CD4-positive, alpha-beta T cell (primary cell): ENCODE measurements at regions of chr19 and their contacts with region 1.

Region 1: DNA sequence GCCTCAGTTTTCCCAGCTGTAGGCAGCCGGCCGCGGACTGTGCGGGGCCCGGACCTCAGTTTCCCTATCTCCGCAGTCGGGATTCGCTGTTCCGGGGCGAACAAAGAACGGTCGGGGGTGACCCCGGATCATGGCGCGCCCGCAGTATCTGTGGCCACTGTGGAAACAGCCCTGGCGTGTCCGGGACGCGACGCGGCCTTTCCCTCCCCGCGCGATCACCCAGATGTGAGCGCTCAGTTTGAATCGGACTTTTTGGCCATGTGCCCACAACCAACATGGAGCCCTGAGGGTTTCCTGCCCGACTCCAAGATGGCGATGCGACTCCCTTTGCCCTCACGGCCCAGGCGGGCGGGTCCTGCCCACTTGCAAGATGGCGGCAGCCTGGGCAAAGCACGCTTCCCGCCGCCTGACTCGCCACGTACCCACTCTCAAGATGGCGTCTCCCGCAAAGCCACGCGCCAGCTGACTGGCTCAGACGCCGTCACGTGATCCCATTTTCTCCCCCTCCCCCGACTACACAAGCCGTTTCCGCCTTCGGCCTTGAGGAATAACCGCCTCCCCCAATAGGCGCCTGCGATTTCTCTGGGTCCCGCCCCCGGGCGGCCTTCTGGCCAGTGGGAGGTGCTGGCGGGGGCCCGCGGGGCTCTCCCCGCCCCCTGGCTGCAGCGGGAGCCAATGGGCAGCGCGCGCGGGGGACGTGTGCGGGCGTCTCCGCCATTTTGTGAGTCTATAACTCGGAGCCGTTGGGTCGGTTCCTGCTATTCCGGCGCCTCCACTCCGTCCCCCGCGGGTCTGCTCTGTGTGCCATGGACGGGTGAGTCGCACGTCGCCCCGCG is at the start of gene PTBP1:
- DNase-seq: peak; percentile 97 to 100 (median 99)
- ATAC-seq: peak; percentile 83
- H3K4me3 ChIP-seq: peak within 1 kb of the TSS; percentile 87
- H3K4me3 Mint-ChIP-seq: peak within 1 kb of the TSS; percentile 89
- H3K27ac ChIP-seq: peak within 1 kb of the TSS; percentile 67 to 72
- H3K27ac Mint-ChIP-seq: peak within 1 kb of the TSS; percentile 87
- H3K4me1 ChIP-seq: peaks cover 48% of the 10 kb centered on the region
- H3K4me1 Mint-ChIP-seq: peaks cover 36% of the 10 kb centered on the region
- H3K27me3 ChIP-seq: no peaks in the 10 kb centered on the region
- H3K27me3 Mint-ChIP-seq: no peaks in the 10 kb centered on the region
- CTCF ChIP-seq: no peak
- total RNA-seq, gene PTBP1: 246 to 252 TPM

Region 2: GRCh38 chr19:835210-835810 is 38.4 kb after region 1 on chr19:
- CTCF ChIA-PET with region 1: no interaction called
- POLR2A ChIA-PET with region 1: no interaction called
- intact Hi-C with region 1: no loop called
- DNase-seq: peak in 1 of 14 experiments; percentile 44
- ATAC-seq: no peak
- H3K4me3 ChIP-seq: no peak overlapping the region
- H3K4me3 Mint-ChIP-seq: no peak overlapping the region
- H3K27ac ChIP-seq: no peak overlapping the region
- H3K27ac Mint-ChIP-seq: no peak overlapping the region
- H3K4me1 ChIP-seq: no peaks in the 10 kb centered on the region
- H3K4me1 Mint-ChIP-seq: no peaks in the 10 kb centered on the region
- H3K27me3 ChIP-seq: peaks cover 5 to 8% of the 10 kb centered on the region in 2 experiments
- H3K27me3 Mint-ChIP-seq: peaks cover 14% of the 10 kb centered on the region
- CTCF ChIP-seq: no peak

Region 3: DNA sequence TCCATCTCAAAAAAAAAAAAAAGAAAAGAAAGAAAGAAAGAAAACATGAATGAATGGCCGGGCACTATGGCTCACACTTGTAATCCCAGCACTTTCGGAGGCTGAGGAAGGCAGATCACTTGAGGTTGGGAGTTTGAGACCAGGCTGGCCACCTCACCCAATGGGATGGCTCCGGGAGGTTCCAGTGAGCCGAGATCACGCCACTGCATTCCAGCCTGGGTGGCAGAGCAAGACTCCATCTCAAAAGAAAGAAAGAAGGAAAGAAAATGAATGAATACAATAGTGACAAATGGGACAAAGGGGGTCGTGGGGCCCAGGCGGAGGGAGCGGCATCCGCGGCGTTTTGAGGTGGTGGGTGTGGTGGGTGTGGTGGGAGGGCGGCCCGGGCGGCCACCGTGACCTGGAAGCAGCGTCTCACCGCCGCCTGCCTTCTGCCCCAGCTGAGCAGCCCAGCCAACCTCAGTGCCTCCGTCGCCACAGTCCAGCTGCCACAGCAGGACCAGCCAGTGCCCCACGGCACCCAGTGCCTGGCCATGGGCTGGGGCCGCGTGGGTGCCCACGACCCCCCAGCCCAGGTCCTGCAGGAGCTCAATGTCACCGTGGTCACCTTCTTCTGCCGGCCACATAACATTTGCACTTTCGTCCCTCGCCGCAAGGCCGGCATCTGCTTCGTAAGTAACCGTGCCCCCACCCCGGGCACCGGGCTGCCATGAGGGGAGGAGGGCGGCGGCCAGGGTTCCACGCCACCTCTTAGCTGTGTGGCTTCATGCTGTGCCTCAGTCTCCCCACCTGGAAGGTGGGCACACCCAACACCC is 49.0 kb after region 1 on chr19:
- CTCF ChIA-PET with region 1: no interaction called
- POLR2A ChIA-PET with region 1: no interaction called
- intact Hi-C with region 1: no loop called
- DNase-seq: no peak
- ATAC-seq: no peak
- H3K4me3 ChIP-seq: no peak overlapping the region
- H3K4me3 Mint-ChIP-seq: no peak overlapping the region
- H3K27ac ChIP-seq: no peak overlapping the region
- H3K27ac Mint-ChIP-seq: no peak overlapping the region
- H3K4me1 ChIP-seq: peaks cover 14% of the 10 kb centered on the region
- H3K4me1 Mint-ChIP-seq: no peaks in the 10 kb centered on the region
- H3K27me3 ChIP-seq: peaks cover 43 to 52% of the 10 kb centered on the region in 2 experiments
- H3K27me3 Mint-ChIP-seq: peaks cover 70% of the 10 kb centered on the region
- CTCF ChIP-seq: no peak

Region 4: GRCh38 chr19:1103708-1104310 is 306.9 kb after region 1 on chr19 and contains the start of gene GPX4:
- CTCF ChIA-PET with region 1: no interaction called
- POLR2A ChIA-PET with region 1: interaction called, 4 read pairs
- intact Hi-C with region 1: loop called in 1 of 2 experiments (anchors 10 kb)
- DNase-seq: peak; percentile 97 to 100 (median 98)
- ATAC-seq: peak; percentile 89
- H3K4me3 ChIP-seq: peak within 1 kb of the TSS; percentile 76
- H3K4me3 Mint-ChIP-seq: peak within 1 kb of the TSS; percentile 89
- H3K27ac ChIP-seq: peak within 1 kb of the TSS; percentile 69 to 96
- H3K27ac Mint-ChIP-seq: peak within 1 kb of the TSS; percentile 95
- H3K4me1 ChIP-seq: peaks cover 62% of the 10 kb centered on the region
- H3K4me1 Mint-ChIP-seq: peaks cover 31% of the 10 kb centered on the region
- H3K27me3 ChIP-seq: no peaks in the 10 kb centered on the region
- H3K27me3 Mint-ChIP-seq: no peaks in the 10 kb centered on the region
- CTCF ChIP-seq: no peak
- total RNA-seq, gene GPX4: 174 to 175 TPM

Region 5: GRCh38 chr19:1249298-1249989 is 452.5 kb after region 1 on chr19:
- CTCF ChIA-PET with region 1: no interaction called
- POLR2A ChIA-PET with region 1: interaction called, 3 read pairs
- intact Hi-C with region 1: loop called in 1 of 2 experiments (anchors 10 kb)
- DNase-seq: peak; percentile 90 to 99 (median 96)
- ATAC-seq: peak; percentile 55
- H3K4me3 ChIP-seq: peak overlapping the region; percentile 71
- H3K4me3 Mint-ChIP-seq: peak overlapping the region; percentile 97
- H3K27ac ChIP-seq: peak overlapping the region; percentile 69 to 86
- H3K27ac Mint-ChIP-seq: peak overlapping the region; percentile 92
- H3K4me1 ChIP-seq: peaks cover 55% of the 10 kb centered on the region
- H3K4me1 Mint-ChIP-seq: peaks cover 10% of the 10 kb centered on the region
- H3K27me3 ChIP-seq: no peaks in the 10 kb centered on the region
- H3K27me3 Mint-ChIP-seq: no peaks in the 10 kb centered on the region
- CTCF ChIP-seq: no peak